A549 (cell line): ENCODE measurements at regions of chr12 and their contacts with region 1.

Region 1: DNA sequence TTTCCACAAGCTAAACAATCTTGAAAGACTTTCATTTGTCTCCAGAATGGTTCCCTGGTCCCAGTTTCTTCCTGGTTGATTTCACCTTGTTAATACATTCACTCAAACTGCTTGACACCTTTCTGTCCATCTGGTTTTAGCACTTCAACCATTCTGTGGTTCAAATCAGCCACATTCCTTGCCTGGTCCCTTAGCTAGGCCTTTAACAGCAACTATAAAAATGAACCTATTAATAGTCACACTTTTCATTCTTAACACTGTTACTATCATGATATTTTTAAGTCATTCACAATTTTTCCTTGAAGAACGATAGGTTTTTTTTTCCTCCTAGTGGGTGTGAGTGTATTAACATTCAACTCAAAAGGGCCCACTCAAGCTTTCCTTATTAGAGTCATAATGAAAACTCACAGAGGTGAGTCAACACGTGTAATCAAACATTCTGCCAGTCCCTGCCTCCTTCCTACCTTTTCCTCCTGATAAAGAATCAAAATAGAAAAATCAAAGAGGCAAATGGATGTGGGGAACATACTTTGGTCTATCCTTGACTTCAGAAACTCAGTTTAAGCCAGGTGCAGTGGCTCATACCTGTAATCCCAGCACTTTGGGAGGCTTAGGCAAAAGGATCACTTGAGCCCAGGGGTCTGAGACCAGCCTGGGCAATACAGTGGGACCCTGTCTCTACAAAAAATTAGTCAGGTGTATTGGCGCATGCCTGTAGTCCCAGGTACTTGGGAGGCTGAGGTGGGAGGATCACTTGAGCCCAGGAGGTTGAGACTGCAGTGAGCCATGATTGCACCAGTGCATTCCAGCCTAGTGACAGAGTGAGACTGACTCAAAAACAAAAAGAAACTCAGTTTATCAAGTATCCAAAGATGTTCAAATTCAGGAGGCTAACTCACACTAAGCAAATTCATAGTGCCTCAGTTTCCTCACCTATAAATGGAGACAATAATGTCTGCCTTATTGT is 34.5 kb upstream of the CCNT1 start:
- DNase-seq: no peak
- ATAC-seq: no peak
- H3K4me3 ChIP-seq: no peak overlapping the region
- H3K27ac ChIP-seq: no peak overlapping the region
- H3K4me1 ChIP-seq: no peaks in the 10 kb centered on the region
- CTCF ChIP-seq: no peak
- EP300 ChIP-seq: no peak
- POLR2A ChIP-seq: no peak
- RAD21 ChIP-seq: no peak

Region 2: DNA sequence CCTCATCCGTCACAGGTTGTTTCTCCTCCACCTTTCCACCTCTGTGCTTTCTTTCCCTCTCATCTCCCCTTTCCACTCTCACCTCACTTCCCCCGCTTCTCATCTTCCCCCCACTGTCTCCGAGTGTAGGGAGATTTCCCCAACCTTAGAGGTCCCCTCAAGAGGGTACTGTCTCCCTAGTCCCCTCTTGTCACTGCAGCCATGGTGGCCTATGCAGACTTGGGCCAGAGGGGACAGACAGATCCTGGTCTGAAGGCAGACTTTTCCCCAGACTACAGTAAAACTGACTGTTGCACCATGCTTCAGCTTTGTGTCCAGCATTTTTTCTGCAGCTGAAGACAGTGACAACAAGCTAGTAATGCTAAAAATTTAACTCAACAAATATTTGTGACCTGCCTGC is 110.2 kb before region 1 on chr12:
- CTCF ChIA-PET with region 1: no interaction called
- POLR2A ChIA-PET with region 1: no interaction called
- DNase-seq: no peak
- ATAC-seq: peak; percentile 51 to 56; a peak in 4 of 6 replicates
- H3K4me3 ChIP-seq: no peak overlapping the region
- H3K27ac ChIP-seq: no peak overlapping the region
- H3K4me1 ChIP-seq: no peaks in the 10 kb centered on the region
- CTCF ChIP-seq: no peak
- EP300 ChIP-seq: no peak
- POLR2A ChIP-seq: no peak
- RAD21 ChIP-seq: no peak

Region 3: GRCh38 chr12:48651681-48652080 is 99.4 kb before region 1 on chr12:
- CTCF ChIA-PET with region 1: no interaction called
- POLR2A ChIA-PET with region 1: no interaction called
- DNase-seq: no peak
- ATAC-seq: no peak; a peak in 1 of 6 replicates
- H3K4me3 ChIP-seq: no peak overlapping the region
- H3K27ac ChIP-seq: no peak overlapping the region
- H3K4me1 ChIP-seq: no peaks in the 10 kb centered on the region
- CTCF ChIP-seq: no peak
- EP300 ChIP-seq: no peak
- POLR2A ChIP-seq: no peak
- RAD21 ChIP-seq: no peak

Region 4: GRCh38 chr12:48765753-48766162 is 14.7 kb after region 1 on chr12:
- CTCF ChIA-PET with region 1: interaction called, 82 read pairs
- POLR2A ChIA-PET with region 1: no interaction called
- DNase-seq: no peak
- ATAC-seq: no peak
- H3K4me3 ChIP-seq: no peak overlapping the region
- H3K27ac ChIP-seq: no peak overlapping the region
- H3K4me1 ChIP-seq: no peaks in the 10 kb centered on the region
- CTCF ChIP-seq: no peak
- EP300 ChIP-seq: no peak
- POLR2A ChIP-seq: no peak
- RAD21 ChIP-seq: no peak

Region 5: DNA sequence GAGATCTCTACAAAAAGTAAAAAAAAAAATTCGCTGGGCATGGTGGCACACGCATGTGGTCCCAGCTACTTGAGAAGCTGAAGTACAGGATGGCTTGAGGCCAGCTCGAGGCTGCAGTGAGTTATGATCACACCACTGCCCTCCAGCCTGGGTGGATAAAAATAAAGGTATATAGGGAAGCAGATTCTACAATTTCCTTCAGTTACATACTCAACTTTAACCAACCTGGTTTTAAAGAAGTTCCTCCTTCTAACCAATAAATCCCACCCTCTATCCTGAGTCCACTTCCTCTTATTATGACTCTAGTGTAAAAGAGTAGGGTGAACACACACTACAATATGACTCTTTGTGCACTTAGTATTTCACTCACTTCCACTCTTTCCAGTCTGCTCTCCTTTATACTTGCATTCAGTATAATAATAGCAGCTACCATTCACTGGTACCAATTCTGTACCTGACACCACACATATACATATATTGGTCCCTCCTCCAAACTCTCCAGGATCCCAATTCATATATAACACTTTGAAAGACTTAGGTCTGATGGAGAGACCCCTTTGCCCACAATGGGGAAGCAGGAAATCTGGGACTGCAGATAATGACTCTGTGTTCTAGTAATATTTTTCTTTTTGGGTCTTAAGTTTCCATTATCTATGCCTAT is 203.9 kb after region 1 on chr12:
- CTCF ChIA-PET with region 1: no interaction called
- POLR2A ChIA-PET with region 1: no interaction called
- DNase-seq: no peak
- ATAC-seq: no peak
- H3K4me3 ChIP-seq: no peak overlapping the region
- H3K27ac ChIP-seq: no peak overlapping the region
- H3K4me1 ChIP-seq: peaks cover 10% of the 10 kb centered on the region
- CTCF ChIP-seq: no peak
- EP300 ChIP-seq: no peak
- POLR2A ChIP-seq: no peak
- RAD21 ChIP-seq: no peak